ENCODE measurements at regions of chr5 and their contacts with region 1.

Region 1: DNA sequence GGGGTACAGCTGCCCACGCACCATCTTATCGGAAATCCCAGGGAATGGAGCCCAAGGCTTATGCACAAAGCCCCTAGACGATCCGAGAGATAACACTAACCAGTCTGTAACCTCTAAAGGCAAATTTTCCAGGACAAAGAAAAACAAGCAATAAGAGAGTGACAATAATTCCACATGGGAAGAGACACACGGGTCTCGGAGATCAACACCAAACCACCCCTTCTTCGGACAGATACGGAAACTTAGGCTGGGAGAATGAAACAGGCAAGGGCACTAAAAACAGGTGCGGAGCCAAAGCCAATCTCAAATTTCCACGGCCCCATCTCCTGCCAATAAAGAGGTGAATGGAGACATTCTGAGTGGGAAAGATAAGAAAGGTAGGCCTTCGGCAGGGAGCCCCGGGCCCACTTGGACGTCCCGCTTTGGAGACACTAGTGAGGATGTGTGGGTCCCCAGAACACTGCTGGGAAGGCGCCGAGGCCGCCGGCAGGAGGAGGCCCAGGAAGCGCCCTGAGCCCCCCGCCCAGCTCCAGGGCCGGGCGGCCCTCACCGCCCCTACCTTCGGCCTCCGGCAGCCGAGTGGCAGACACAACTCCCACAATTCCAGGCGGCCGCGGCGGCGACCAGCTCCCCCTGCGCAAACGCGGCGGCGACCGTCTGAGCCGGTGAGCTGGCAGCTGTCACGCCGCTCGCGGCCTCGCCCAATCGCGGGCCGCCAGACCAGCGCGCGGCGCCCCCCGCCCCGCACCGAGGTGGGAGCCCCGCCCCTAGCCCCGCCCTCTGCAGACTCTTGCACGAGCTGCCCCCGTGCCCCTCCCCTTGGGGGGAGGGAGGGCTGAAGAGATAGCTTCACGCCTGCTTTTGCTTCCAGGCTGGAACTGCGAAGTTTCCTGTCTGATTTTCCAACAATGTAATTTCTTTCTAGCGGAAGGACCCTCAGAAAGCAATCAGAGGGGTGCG is at the start of gene SIL1:
- DNase-seq: peak; percentile 97
- total RNA-seq, gene SIL1: 43.1 TPM

Region 2: GRCh38 chr5:138869763-138870500 is 328.1 kb before region 1 on chr5:
- intact Hi-C with region 1: loop called (anchors 5 kb)
- DNase-seq: no peak

Region 3: DNA sequence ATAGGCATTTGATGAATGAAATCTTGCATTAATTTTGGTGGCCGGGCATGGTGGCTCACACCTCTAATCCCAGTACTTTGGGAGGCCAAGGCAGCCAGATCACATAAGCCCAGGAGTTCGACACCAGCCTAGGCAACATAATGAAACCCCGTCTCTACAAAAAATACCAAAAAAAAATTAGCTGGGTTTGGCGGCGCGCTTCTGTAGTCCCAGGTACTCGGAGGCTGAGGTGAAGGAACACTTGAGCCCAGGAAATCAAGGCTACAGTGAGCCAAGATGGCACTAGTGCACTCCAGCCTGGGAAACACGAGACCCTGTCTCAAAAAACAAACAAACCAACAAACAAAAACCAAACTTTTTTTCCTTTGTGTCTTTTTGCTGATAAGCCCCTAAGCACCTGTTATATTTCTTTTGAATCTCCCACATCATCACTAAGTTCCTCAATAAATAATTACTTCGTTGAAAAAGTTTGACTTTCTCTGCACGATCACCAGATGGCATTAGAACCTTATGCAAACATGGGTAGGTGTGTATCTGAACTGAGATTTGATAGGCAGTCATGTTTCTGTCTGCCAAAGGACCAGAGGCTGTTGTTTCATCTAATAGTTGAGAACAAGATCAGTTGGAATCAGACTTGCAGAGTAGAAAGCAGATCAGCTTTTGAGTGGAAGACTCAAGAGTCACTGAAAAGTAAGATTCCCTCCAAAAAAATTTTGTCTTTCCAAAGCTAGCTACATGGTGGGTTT is 90.1 kb after region 1 on chr5:
- intact Hi-C with region 1: no loop called
- DNase-seq: no peak